Breast epithelium (tissue), 4 donors: ENCODE measurements at regions of chr9 and their contacts with region 1.

Region 1: GRCh38 chr9:93750045-93750444 is 173.7 kb downstream of the PHF2 start:
- DNase-seq: no peak
- H3K4me3 ChIP-seq: no peak overlapping the region
- H3K27ac ChIP-seq: no peak overlapping the region
- H3K4me1 ChIP-seq: no peaks in the 10 kb centered on the region
- H3K27me3 ChIP-seq: no peaks in the 10 kb centered on the region
- CTCF ChIP-seq: no peak
- POLR2A ChIP-seq: no peak

Region 2: DNA sequence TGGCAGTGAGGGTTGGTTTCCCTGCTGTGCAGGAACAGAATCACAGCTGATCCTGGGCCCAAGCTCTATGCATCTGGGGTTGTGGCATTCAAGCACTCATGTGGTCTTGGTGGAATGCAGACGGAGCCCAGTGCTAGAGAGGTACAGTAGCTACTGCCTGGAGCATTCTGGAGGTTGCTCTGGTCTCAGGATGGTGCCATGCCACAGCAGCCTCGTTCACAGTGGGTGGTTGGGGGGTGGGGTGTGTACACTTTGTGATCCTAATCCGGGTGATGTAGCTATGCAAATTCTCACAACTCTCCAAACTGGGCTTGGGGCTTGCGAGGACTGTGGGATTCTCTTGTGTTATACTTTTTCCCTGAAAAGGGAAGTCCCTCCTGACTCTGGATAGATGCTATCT is 757.5 kb before region 1 on chr9:
- intact Hi-C with region 1: loop called (anchors 10 kb)
- DNase-seq: peak in 1 of 2 donors; percentile 4
- H3K4me3 ChIP-seq: no peak overlapping the region
- H3K27ac ChIP-seq: no peak overlapping the region
- H3K4me1 ChIP-seq: no peaks in the 10 kb centered on the region
- H3K27me3 ChIP-seq: no peaks in the 10 kb centered on the region
- CTCF ChIP-seq: no peak
- POLR2A ChIP-seq: no peak

Region 3: GRCh38 chr9:93575796-93576257 is 174.2 kb before region 1 on chr9:
- intact Hi-C with region 1: no loop called
- DNase-seq: peak in 1 of 2 donors; percentile 50
- H3K4me3 ChIP-seq: peak overlapping the region; percentile 81 to 99 (median 90)
- H3K27ac ChIP-seq: peak overlapping the region; percentile 96 to 99
- H3K4me1 ChIP-seq: peaks cover 3 to 13% of the 10 kb centered on the region in 2 donors
- H3K27me3 ChIP-seq: no peaks in the 10 kb centered on the region
- CTCF ChIP-seq: no peak
- POLR2A ChIP-seq: no peak

Region 4: GRCh38 chr9:93697352-93698139 is 52.5 kb before region 1 on chr9:
- intact Hi-C with region 1: no loop called
- DNase-seq: no peak
- H3K4me3 ChIP-seq: no peak overlapping the region
- H3K27ac ChIP-seq: no peak overlapping the region
- H3K4me1 ChIP-seq: no peaks in the 10 kb centered on the region
- H3K27me3 ChIP-seq: no peaks in the 10 kb centered on the region
- CTCF ChIP-seq: no peak
- POLR2A ChIP-seq: no peak